PC-3 (cell line): ENCODE measurements at regions of chr12 and their contacts with region 1.

Region 1: GRCh38 chr12:111812881-111813741 is 28.9 kb upstream of the MAPKAPK5 start:
- DNase-seq: peak; percentile 95
- ATAC-seq: peak; percentile 99
- H3K4me3 ChIP-seq: no peak overlapping the region
- H3K27ac ChIP-seq: no peak overlapping the region
- H3K4me1 ChIP-seq: no peaks in the 10 kb centered on the region
- H3K27me3 ChIP-seq: no peaks in the 10 kb centered on the region
- CTCF ChIP-seq: peak; percentile 94

Region 2: DNA sequence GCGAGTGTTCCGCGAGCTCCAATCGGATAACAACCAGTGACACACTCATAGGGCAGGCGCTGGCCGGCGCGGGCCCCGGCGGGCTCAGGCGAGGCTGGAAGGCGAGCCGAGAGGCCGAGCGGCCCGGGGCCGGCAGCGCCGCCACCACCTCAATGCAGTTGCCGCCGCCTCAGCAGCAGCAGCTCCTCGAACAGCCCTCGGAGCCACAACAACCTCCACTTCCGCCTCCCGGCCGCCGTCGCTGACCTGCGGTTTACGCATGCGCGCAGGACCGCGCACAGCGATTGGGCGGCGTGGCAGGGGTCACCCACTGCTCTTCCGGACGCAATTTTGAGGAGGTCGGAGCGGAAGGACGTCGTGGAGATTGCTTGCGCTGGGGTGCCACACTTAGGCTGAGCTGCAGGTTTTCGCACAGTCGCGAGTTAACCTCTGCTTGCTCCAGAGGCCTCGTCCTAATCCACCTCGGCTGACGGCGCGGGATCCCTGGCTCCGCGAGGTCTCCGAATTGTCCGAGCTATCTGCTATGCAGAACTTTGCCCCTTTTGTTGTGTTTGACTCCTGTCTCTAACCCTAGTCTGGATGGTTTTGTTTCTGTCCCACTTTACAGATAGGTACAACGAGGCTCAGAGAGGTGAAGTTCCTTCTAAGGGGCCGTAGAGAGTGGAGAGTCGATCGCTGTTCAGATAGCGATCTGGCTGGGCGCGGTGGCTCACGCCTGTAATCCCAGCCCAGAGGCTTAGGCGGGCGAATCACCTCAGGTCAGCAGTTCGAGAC is 127.2 kb before region 1 on chr12 and contains the starts of genes ACAD10 and BRAP:
- CTCF ChIA-PET with region 1: interaction called, 7 read pairs
- POLR2A ChIA-PET with region 1: no interaction called
- intact Hi-C with region 1: loop called (anchors 1 kb)
- DNase-seq: peak; percentile 98
- ATAC-seq: peak; percentile 95
- H3K4me3 ChIP-seq: peak within 1 kb of the TSS; percentile 86
- H3K27ac ChIP-seq: peak within 1 kb of the TSS; percentile 48
- H3K4me1 ChIP-seq: peaks cover 16% of the 10 kb centered on the region
- H3K27me3 ChIP-seq: no peaks in the 10 kb centered on the region
- CTCF ChIP-seq: no peak
- total RNA-seq, gene ACAD10: 21.8 and 27.4 TPM in 2 replicates
- total RNA-seq, gene BRAP: 18.0 and 24.7 TPM in 2 replicates

Region 3: DNA sequence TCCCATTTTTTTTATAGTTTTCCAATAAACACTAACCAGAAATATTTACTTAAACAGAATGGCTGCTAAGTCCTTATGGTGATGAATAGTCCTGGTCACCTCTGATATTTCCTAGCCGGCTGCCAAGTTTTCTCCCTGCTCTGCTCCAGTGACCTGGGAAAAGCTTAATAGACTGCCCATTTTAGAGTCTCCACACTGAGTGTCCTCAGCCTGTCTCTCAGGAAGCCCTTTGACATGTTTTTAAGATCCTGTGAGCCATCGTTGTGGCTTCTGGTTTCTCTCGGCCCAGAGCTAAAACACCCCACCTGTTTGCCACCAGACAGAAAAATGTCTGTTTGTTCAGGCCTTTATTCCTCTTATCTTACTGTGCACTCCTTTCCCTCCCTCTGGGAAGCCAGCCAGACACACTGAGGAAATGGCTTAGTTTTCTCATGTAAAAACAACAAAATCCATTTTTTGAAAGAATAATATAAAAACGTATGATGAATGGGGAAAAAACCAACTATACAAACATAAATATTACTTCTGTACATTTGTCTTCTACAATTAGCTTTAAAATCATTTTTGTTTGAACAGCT is 71.8 kb before region 1 on chr12:
- CTCF ChIA-PET with region 1: interaction called, 7 read pairs
- POLR2A ChIA-PET with region 1: no interaction called
- intact Hi-C with region 1: loop called (anchors 1 kb)
- DNase-seq: peak; percentile 61
- ATAC-seq: peak; percentile 92
- H3K4me3 ChIP-seq: no peak overlapping the region
- H3K27ac ChIP-seq: peak overlapping the region; percentile 19
- H3K4me1 ChIP-seq: peaks cover 14% of the 10 kb centered on the region
- H3K27me3 ChIP-seq: no peaks in the 10 kb centered on the region
- CTCF ChIP-seq: no peak

Region 4: GRCh38 chr12:111753144-111753881 is 59.8 kb before region 1 on chr12:
- CTCF ChIA-PET with region 1: interaction called, 9 read pairs
- POLR2A ChIA-PET with region 1: no interaction called
- intact Hi-C with region 1: loop called (anchors 1 kb)
- DNase-seq: peak; percentile 48
- ATAC-seq: peak; percentile 88
- H3K4me3 ChIP-seq: no peak overlapping the region
- H3K27ac ChIP-seq: no peak overlapping the region
- H3K4me1 ChIP-seq: no peaks in the 10 kb centered on the region
- H3K27me3 ChIP-seq: no peaks in the 10 kb centered on the region
- CTCF ChIP-seq: peak; percentile 75

Region 5: DNA sequence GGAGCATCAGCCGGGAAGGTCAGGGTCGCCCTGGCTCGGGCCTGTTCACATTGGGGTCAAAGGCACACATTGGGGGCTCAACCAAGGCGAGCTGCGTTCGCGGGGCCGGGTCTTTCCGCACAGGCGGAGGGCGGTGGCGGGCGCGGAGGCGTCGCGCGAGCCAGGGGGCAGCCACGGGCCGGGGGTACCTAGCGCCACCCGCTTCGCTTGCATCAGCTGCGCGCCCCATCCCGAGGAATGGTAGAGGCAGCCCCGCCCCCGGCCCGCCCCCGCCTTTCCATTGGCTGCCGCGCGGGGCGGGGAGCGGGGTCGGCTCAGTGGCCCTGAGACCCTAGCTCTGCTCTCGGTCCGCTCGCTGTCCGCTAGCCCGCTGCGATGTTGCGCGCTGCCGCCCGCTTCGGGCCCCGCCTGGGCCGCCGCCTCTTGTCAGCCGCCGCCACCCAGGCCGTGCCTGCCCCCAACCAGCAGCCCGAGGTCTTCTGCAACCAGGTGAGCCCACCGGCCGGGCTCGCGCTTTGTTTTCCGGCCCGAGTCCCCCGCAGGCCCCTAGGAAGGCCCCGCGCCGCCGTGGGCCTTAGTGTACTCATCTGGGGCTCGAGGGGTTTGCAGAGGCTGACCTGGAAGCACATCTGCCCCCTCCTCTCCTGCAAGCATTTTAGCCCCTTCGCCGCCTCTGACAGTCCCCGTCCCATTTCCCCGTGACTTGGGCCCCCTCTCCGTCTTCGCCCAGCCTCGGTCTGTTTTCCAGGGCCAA is 46.3 kb before region 1 on chr12 and contains the start of gene ALDH2:
- CTCF ChIA-PET with region 1: interaction called, 5 read pairs
- POLR2A ChIA-PET with region 1: interaction called, 10 read pairs
- intact Hi-C with region 1: loop called (anchors 5 kb)
- DNase-seq: no peak
- ATAC-seq: peak; percentile 40
- H3K4me3 ChIP-seq: peak within 1 kb of the TSS; percentile 56
- H3K27ac ChIP-seq: no peak within 1 kb of the TSS
- H3K4me1 ChIP-seq: peaks cover 7% of the 10 kb centered on the region; the same call in 1 of the 2 replicates
- H3K27me3 ChIP-seq: 0 out of 2 replicates have a peak, but pooled peaks cover 3% of the 10 kb centered on the region
- CTCF ChIP-seq: no peak
- total RNA-seq, gene ALDH2: 0.35 and 2.0 TPM in 2 replicates